IMR-90 (cell line): ENCODE measurements at regions of chr2 and their contacts with region 1.

Region 1: GRCh38 chr2:180125245-180125962 is 118.3 kb upstream of the CWC22 start:
- DNase-seq: peak; percentile 96
- ATAC-seq: peak; percentile 97
- H3K4me3 ChIP-seq: no peak overlapping the region
- H3K27ac ChIP-seq: no peak overlapping the region
- H3K4me1 ChIP-seq: 0 out of 2 replicates have a peak, but pooled peaks cover 2% of the 10 kb centered on the region
- H3K27me3 ChIP-seq: no peaks in the 10 kb centered on the region
- CTCF ChIP-seq: peak; percentile 89
- POLR2A ChIP-seq: peak; percentile 40; the same call in 1 of the 2 replicates
- RAD21 ChIP-seq: peak; percentile 91

Region 2: DNA sequence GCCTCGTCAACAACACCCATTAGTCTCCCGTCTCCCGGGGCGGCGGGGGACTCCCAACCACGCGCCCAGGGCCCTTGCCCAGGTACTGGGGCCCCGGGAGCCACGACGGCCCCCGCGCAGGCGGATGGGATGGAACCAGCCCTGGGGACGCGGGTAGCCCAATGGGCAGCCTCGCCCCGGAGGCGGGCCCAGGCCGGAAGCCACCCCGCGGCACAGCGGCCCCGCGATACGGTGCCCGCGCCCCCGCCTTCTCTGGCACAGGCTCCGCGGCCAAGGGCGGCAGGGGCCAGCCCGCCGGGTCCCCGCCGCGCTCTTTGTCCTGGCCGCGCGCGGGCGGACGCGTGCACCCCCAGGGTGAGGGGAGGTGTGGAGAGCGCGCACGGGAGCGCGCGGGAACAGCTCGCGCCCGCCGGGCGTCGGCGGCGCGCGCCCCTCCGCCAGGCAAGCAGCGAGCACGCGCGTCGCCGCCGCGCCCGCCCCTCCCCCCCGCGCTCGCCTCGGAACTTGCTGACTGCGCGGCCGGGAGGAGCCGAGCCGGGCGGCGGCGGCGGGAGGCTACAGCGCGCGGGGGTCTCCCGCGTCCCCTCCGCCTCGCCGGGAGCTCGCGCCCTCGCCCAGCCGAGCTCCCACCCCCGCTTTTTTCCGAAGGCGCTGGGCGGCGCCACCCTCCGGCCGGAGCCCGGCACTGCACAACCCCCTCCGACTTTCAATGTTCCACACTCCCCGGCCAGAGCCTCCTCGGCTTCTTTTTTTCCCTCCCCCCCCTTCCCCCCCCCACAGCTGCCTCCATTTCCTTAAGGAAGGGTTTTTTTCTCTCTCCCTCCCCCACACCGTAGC is 854.9 kb after region 1 on chr2 and contains the start of gene UBE2E3:
- CTCF ChIA-PET with region 1: interaction called, 12 read pairs
- POLR2A ChIA-PET with region 1: no interaction called
- dilution Hi-C with region 1: no loop called
- in situ Hi-C with region 1: loop called (anchors 10 kb)
- intact Hi-C with region 1: loop called (anchors 1 kb)
- DNase-seq: peak; percentile 72
- ATAC-seq: peak; percentile 82
- H3K4me3 ChIP-seq: peak within 1 kb of the TSS; percentile 96
- H3K27ac ChIP-seq: peak within 1 kb of the TSS; percentile 75
- H3K4me1 ChIP-seq: 0 out of 2 replicates have a peak, but pooled peaks cover 7% of the 10 kb centered on the region
- H3K27me3 ChIP-seq: no peaks in the 10 kb centered on the region
- CTCF ChIP-seq: peak; percentile 77
- POLR2A ChIP-seq: peak; percentile 44
- RAD21 ChIP-seq: peak; percentile 67
- total RNA-seq, gene UBE2E3: 92.8 and 106 TPM in 2 replicates

Region 3: DNA sequence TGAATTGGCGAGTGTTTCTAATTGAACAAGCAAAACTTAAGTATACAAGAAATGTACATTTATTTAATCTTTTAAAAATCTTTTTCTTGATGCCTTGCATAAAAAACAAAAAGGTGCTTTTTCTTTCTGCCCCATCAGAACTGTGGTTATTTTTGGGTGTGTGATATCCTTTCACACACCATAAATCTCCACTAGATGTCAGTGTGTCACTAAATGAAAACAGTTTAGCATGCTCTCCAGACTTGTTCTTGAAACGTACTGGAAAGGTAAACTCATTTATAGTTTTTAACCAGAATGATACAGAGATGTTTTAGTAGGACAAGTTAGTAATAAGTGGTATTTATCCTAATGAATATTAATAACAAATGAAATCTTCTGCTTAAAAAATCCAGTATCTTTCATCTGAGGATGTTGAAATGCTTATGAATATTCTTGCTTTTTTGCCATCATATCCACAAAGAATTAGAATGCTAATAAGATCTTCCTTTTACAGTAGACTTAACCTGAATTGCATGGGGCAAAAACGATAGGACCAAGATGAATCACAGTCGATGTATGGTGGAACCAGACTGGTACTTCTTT is 951.8 kb after region 1 on chr2:
- CTCF ChIA-PET with region 1: interaction called, 4 read pairs
- POLR2A ChIA-PET with region 1: no interaction called
- dilution Hi-C with region 1: no loop called
- in situ Hi-C with region 1: loop called (anchors 10 kb)
- intact Hi-C with region 1: loop called (anchors 1 kb)
- DNase-seq: peak; percentile 62
- ATAC-seq: peak; percentile 66
- H3K4me3 ChIP-seq: no peak overlapping the region
- H3K27ac ChIP-seq: no peak overlapping the region
- H3K4me1 ChIP-seq: peaks cover 3% of the 10 kb centered on the region
- H3K27me3 ChIP-seq: no peaks in the 10 kb centered on the region
- CTCF ChIP-seq: peak; percentile 66
- POLR2A ChIP-seq: no peak
- RAD21 ChIP-seq: peak; percentile 61

Region 4: GRCh38 chr2:181457121-181457740 is 1331.8 kb after region 1 on chr2 and contains the start of gene ITGA4:
- CTCF ChIA-PET with region 1: no interaction called
- POLR2A ChIA-PET with region 1: no interaction called
- dilution Hi-C with region 1: no loop called
- in situ Hi-C with region 1: loop called (anchors 10 kb)
- intact Hi-C with region 1: loop called (anchors 2 kb)
- DNase-seq: peak; percentile 65
- ATAC-seq: peak; percentile 97
- H3K4me3 ChIP-seq: peak within 1 kb of the TSS; percentile 75
- H3K27ac ChIP-seq: peak within 1 kb of the TSS; percentile 60; the same call in 1 of the 2 replicates
- H3K4me1 ChIP-seq: 0 out of 2 replicates have a peak, but pooled peaks cover 2% of the 10 kb centered on the region
- H3K27me3 ChIP-seq: no peaks in the 10 kb centered on the region; the same call in 1 of the 2 replicates
- CTCF ChIP-seq: peak; percentile 77
- POLR2A ChIP-seq: no peak
- RAD21 ChIP-seq: peak; percentile 67
- total RNA-seq, gene ITGA4: 13.6 and 20.6 TPM in 2 replicates

Region 5: DNA sequence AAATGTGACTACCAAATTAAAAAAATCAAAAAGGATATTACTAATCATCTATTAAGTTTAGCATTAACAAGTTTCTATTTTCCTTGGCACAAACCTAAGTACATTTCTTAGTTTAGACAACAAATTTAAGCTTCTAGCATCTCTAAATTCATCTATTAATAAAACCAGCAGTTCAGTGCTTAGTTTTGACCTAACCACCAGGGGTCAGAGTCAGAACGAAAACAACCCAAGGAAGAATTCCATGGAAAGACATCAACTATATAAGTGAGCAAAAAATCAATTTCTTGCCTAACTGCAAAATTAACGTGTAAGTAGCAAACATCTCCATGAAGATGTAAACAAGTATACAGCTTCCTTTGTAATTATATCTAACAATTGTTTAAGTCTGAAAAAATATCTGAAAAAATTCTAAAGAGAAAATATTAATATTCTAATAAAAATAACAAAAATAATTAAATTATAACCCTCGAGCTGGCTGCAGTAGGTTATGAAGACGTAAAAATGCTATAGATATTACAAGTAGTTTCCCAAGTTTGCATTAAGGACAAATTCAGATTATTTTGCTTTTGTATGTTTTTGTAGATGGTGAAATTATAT is 1447.8 kb after region 1 on chr2:
- CTCF ChIA-PET with region 1: interaction called, 3 read pairs
- POLR2A ChIA-PET with region 1: no interaction called
- dilution Hi-C with region 1: no loop called
- in situ Hi-C with region 1: no loop called
- intact Hi-C with region 1: loop called (anchors 1 kb)
- DNase-seq: peak; percentile 50
- ATAC-seq: peak; percentile 54; the same call in 1 of the 2 replicates
- H3K4me3 ChIP-seq: no peak overlapping the region
- H3K27ac ChIP-seq: no peak overlapping the region
- H3K4me1 ChIP-seq: no peaks in the 10 kb centered on the region
- H3K27me3 ChIP-seq: peaks cover 9% of the 10 kb centered on the region
- CTCF ChIP-seq: peak; percentile 55
- POLR2A ChIP-seq: no peak
- RAD21 ChIP-seq: peak; percentile 47

Region 6: DNA sequence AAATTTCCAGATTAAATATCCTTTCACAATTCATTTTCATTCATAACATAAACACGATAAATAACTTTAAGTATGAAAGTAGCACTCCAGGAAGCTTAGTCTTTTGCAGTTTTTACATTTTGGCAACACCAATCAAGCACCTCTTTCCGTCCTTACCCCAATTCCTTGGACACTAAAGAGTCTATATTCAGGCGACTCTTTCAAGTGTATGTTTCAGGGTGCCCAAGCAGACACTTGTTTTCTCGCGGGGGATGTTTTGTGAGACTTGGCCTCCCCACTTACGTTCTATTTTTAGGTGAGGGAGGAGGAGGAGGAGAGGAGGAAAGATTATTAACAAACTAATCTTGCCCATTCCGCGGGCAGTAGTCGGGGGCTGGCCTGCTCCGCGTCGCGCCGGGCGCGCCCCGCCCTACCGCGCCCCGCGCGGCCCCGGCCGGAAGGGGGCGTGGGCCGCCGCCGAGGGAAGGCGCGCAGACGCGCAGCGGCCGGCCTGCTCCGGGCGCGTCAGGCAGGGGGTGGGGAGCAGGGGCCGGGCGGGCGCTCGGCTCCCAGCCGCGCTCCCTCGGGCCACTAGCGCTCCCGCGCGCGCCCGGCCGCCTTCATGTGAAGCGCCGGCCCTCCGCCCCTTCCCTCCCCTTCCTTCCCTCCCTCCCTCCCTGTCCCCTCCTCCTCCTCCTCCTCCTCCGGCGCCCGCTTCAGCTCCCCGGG is 1766.0 kb after region 1 on chr2 and contains the start of gene ITPRID2:
- CTCF ChIA-PET with region 1: no interaction called
- POLR2A ChIA-PET with region 1: no interaction called
- dilution Hi-C with region 1: no loop called
- in situ Hi-C with region 1: loop called (anchors 10 kb)
- intact Hi-C with region 1: loop called (anchors 10 kb)
- DNase-seq: peak; percentile 89
- ATAC-seq: peak; percentile 97
- H3K4me3 ChIP-seq: peak within 1 kb of the TSS; percentile 98
- H3K27ac ChIP-seq: peak within 1 kb of the TSS; percentile 98
- H3K4me1 ChIP-seq: peaks cover 3% of the 10 kb centered on the region; the same call in 1 of the 2 replicates
- H3K27me3 ChIP-seq: no peaks in the 10 kb centered on the region
- CTCF ChIP-seq: peak; percentile 44; the same call in 1 of the 2 replicates
- POLR2A ChIP-seq: no peak
- RAD21 ChIP-seq: no peak
- total RNA-seq, gene ITPRID2: 168 and 187 TPM in 2 replicates